ENCODE measurements at regions of chr14 and their contacts with region 1.

Region 1: DNA sequence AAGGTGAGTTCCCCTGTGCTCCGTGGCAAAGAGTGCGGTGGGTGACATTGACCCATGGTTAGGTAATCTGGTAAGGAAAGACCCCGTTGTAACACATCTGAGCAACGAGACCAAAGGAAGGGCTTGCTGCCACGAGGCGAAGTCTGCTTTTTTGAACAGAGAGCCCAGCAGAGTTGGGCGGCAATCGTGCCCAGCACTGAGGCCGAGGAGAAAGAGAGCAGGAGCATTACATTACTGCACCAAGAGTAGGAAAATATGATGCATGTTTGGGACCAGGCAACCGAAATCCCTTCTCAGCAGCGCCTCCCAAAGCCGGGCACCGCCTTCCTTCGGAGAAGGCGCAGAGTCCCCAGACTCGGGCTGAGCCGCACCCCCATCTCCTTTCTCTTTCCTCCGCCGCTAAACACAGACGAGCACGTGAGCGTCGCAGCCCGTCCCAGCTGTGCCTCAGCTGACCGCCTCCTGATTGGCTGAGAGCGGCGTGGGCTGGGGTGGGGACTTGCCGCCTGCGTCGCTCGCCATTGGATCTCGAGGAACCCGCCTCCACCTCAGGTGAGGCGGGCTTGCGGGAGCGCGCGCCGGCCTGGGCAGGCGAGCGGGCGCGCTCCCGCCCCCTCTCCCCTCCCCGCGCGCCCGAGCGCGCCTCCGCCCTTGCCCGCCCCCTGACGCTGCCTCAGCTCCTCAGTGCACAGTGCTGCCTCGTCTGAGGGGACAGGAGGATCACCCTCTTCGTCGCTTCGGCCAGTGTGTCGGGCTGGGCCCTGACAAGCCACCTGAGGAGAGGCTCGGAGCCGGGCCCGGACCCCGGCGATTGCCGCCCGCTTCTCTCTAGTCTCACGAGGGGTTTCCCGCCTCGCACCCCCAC is at the start of gene HIF1A:
- DNase-seq: peak; percentile 98
- H3K4me3 Mint-ChIP-seq: peak within 1 kb of the TSS; percentile 95
- H3K27ac Mint-ChIP-seq: peak within 1 kb of the TSS; percentile 90
- H3K4me1 Mint-ChIP-seq: peaks cover 23% of the 10 kb centered on the region
- H3K27me3 Mint-ChIP-seq: no peaks in the 10 kb centered on the region
- CTCF ChIP-seq: no peak
- total RNA-seq, gene HIF1A: 193 and 202 TPM in 2 replicates

Region 2: DNA sequence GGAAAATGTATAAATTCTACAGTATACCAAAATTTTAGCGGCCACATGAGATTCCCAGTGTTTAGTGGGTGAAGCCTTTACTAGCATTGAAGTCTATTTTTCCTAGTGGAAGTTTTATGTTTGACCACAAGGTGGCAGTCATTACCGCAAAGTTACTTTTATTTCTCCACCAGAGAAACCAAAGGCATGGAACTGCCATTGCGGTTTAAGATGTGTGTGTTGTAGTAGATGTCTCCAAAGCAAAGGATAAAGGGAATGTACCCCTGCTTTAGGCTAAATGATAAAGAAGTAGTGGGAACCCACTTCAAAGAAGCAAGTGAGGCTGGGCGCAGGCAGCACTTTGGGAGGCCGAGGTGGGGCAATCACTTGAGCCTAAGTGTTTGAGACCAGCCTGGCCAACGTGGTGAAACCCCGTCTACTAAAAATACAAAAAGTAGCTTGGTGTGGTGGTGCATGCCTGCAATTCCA is 233.2 kb before region 1 on chr14:
- CTCF ChIA-PET with region 1: no interaction called
- POLR2A ChIA-PET with region 1: interaction called, 29 read pairs
- intact Hi-C with region 1: no loop called
- DNase-seq: peak; percentile 78
- H3K4me3 Mint-ChIP-seq: no peak overlapping the region
- H3K27ac Mint-ChIP-seq: peak overlapping the region; percentile 22
- H3K4me1 Mint-ChIP-seq: peaks cover 27% of the 10 kb centered on the region
- H3K27me3 Mint-ChIP-seq: no peaks in the 10 kb centered on the region
- CTCF ChIP-seq: peak; percentile 60

Region 3: GRCh38 chr14:61525293-61526011 is 169.6 kb before region 1 on chr14:
- CTCF ChIA-PET with region 1: interaction called, 9 read pairs
- POLR2A ChIA-PET with region 1: interaction called, 68 read pairs
- intact Hi-C with region 1: loop called (anchors 1 kb)
- DNase-seq: peak; percentile 99
- H3K4me3 Mint-ChIP-seq: peak overlapping the region; percentile 1
- H3K27ac Mint-ChIP-seq: peak overlapping the region; percentile 75
- H3K4me1 Mint-ChIP-seq: peaks cover 56% of the 10 kb centered on the region
- H3K27me3 Mint-ChIP-seq: no peaks in the 10 kb centered on the region
- CTCF ChIP-seq: no peak

Region 4: GRCh38 chr14:61561657-61562276 is 133.3 kb before region 1 on chr14:
- CTCF ChIA-PET with region 1: interaction called, 6 read pairs
- POLR2A ChIA-PET with region 1: interaction called, 32 read pairs
- intact Hi-C with region 1: loop called (anchors 2 kb)
- DNase-seq: peak; percentile 97
- H3K4me3 Mint-ChIP-seq: peak overlapping the region; percentile 3
- H3K27ac Mint-ChIP-seq: peak overlapping the region; percentile 86
- H3K4me1 Mint-ChIP-seq: peaks cover 56% of the 10 kb centered on the region
- H3K27me3 Mint-ChIP-seq: no peaks in the 10 kb centered on the region
- CTCF ChIP-seq: no peak

Region 5: DNA sequence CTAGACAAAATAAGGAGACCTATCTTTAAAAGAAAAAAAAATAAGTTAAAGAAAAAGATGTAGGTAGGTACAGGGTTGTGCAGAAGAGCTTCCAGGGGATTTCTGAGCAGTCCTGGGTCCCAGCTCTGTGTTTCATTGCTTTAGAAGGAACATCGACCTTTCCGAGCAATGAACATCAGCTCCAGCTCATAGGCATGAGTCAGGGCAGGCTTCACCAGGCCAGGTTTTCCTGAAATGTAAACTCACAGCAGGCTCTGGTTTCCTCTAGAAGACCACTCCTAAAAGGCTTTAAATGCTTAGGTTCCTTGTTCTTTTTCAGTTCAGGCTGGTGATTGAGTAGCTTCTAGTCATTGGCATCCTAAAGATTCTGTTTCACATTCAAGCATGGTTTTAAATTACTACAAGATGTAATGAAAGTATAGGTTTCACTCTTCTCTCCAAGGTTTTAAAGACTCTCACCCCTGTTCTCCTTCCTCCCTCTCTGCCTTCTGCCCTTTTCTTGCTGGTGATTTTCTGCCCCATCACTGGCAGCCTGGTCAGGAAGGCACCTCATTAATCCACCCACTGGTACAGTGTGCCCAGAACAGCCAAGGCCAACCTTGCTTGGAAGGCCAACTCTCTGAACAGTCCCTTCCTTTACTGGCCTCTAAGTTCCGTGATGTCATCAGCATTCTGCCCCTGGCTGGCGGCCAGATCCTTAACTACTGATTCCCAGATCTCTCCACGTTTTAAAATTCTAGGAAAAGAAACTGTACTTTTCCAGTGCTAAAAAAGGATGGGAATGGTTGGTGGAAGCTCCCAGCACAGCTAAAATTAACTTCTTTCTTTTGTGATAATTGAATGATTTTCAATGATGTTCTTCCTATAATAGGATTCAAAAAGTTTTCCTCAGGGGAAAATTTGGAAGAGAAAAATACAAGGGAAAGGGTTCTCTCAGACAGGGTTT is 109.2 kb before region 1 on chr14:
- CTCF ChIA-PET with region 1: interaction called, 3 read pairs
- POLR2A ChIA-PET with region 1: interaction called, 13 read pairs
- intact Hi-C with region 1: no loop called
- DNase-seq: peak; percentile 77
- H3K4me3 Mint-ChIP-seq: no peak overlapping the region
- H3K27ac Mint-ChIP-seq: peak overlapping the region; percentile 65
- H3K4me1 Mint-ChIP-seq: peaks cover 35% of the 10 kb centered on the region
- H3K27me3 Mint-ChIP-seq: no peaks in the 10 kb centered on the region
- CTCF ChIP-seq: no peak

Region 6: GRCh38 chr14:61719344-61720293 is 24.6 kb after region 1 on chr14:
- CTCF ChIA-PET with region 1: no interaction called
- POLR2A ChIA-PET with region 1: interaction called, 67 read pairs
- intact Hi-C with region 1: no loop called
- DNase-seq: no peak
- H3K4me3 Mint-ChIP-seq: no peak overlapping the region
- H3K27ac Mint-ChIP-seq: no peak overlapping the region
- H3K4me1 Mint-ChIP-seq: peaks cover 14% of the 10 kb centered on the region
- H3K27me3 Mint-ChIP-seq: no peaks in the 10 kb centered on the region
- CTCF ChIP-seq: no peak

Region 7: GRCh38 chr14:61860294-61860918 is 165.3 kb after region 1 on chr14:
- CTCF ChIA-PET with region 1: no interaction called
- POLR2A ChIA-PET with region 1: no interaction called
- intact Hi-C with region 1: no loop called
- DNase-seq: peak; percentile 60
- H3K4me3 Mint-ChIP-seq: no peak overlapping the region
- H3K27ac Mint-ChIP-seq: no peak overlapping the region
- H3K4me1 Mint-ChIP-seq: no peaks in the 10 kb centered on the region
- H3K27me3 Mint-ChIP-seq: peaks cover 27% of the 10 kb centered on the region
- CTCF ChIP-seq: peak; percentile 68

Region 8: GRCh38 chr14:62126879-62127478 is 431.9 kb after region 1 on chr14:
- CTCF ChIA-PET with region 1: no interaction called
- POLR2A ChIA-PET with region 1: no interaction called
- intact Hi-C with region 1: no loop called
- DNase-seq: peak; percentile 69
- H3K4me3 Mint-ChIP-seq: no peak overlapping the region
- H3K27ac Mint-ChIP-seq: no peak overlapping the region
- H3K4me1 Mint-ChIP-seq: no peaks in the 10 kb centered on the region
- H3K27me3 Mint-ChIP-seq: peaks cover 35% of the 10 kb centered on the region
- CTCF ChIP-seq: peak; percentile 69